Dorsolateral prefrontal cortex (tissue), 120 donors: ENCODE measurements at regions of chr11 and their contacts with region 1.

Region 1: GRCh38 chr11:47766305-47767227 is 575 bp downstream of the FNBP4 start:
- DNase-seq: peak; percentile 34 to 75 (median 56)
- H3K4me3 ChIP-seq: peak overlapping the region; percentile 65 to 99 (median 91)
- H3K27ac ChIP-seq: peak overlapping the region; percentile 80 to 100 (median 99)
- H3K27me3 ChIP-seq: no peaks in the 10 kb centered on the region
- CTCF ChIP-seq: peak in 3 of 56 donors; percentile 2 to 4 (median 3)

Region 2: DNA sequence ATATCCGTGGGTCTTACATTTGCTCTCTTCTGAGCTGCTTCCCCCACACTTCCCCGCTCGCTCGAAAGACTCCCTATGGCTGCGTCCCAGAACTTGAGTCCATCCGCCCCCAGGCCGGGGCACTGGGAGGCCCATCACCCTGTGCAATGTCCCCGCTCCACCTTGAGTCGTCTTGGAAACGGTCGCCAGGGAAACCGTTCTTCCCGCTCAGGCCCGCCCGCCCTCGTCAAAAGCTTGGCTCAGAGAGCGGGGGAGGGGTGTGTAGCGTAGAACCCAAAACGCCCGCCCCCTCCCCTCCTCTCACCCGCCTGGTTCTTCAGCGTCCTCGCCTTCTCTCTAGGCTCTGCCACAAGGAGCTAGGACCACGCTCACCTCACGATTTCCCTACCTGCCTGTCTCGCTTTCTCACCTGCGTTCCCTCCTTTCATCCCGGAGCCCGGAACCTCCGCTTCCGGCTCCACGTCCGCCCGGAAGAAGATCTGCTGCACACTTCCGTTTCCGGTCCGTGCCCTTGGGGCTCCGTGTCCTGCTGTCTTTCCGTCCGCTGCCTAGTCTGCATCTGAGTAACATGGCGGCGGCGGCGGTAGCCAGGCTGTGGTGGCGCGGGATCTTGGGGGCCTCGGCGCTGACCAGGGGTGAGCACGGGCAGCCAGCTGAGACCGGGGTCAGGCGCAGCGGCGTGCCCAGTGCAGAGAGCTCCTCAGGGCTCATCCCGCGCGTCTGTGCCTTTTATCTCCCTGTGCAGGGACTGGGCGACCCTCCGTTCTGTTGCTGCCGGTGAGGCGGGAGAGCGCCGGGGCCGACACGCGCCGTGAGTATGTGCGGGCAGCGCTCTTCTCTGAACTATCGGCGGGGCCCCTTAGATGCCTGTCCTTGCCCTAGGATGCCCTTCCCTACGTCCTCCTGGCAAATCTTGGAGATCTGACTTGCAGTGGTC is 187.8 kb before region 1 on chr11 and contains the starts of genes KBTBD4 and NDUFS3:
- intact Hi-C with region 1: loop called in 1 of 2 experiments (anchors 10 kb)
- DNase-seq: peak; percentile 76 to 93 (median 91)
- H3K4me3 ChIP-seq: peak within 1 kb of the TSS; percentile 77 to 100 (median 94)
- H3K27ac ChIP-seq: peak within 1 kb of the TSS; percentile 65 to 98 (median 92)
- H3K27me3 ChIP-seq: no peaks in the 10 kb centered on the region
- CTCF ChIP-seq: peak in 28 of 56 donors; percentile 10 to 57 (median 28)
- total RNA-seq, gene KBTBD4: 12.8 to 27.9 (median 19.6) TPM
- total RNA-seq, gene NDUFS3: 59.7 to 172 (median 126) TPM

Region 3: DNA sequence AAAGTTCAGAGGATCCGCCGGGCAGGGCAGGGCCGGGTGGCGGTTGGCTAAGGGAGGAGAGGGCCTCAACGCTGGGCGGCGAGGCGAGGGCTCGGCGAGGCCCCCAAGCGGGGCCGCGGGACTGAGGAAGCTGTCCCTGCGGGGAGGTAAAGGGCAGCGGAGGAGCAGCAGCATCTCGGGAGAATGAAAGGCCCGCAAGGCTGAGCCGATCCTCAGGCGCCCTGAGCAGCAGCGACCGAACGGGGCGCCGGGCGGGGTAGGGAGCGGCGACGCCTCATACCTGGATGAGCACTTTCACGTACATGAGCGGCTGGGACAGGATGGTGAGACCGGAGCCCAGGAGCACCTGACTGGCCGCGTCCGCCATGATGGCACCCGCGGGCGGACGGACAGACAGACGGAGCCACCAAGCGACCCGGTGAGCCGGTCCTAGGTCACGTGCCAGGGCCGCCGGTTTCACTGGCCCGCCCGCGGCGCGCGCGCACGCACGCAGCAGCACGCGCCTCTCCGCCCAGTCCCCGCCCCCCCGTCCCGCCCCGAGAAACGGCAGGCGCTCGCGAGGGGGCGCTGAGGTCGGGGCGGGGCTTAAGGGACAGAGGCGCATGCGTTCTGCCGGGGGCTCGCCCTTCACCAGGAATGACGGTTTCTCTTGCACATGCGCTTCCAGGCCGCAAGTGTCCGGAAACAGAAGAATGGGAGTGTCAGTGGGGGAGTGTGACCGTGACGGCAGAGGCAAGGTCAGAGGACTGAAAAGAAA is 124.3 kb before region 1 on chr11 and contains the start of gene MTCH2:
- intact Hi-C with region 1: loop called (anchors 1 to 2 kb)
- DNase-seq: peak; percentile 84 to 95 (median 93)
- H3K4me3 ChIP-seq: peak within 1 kb of the TSS; percentile 35 to 100 (median 92)
- H3K27ac ChIP-seq: peak within 1 kb of the TSS; percentile 78 to 100 (median 97)
- H3K27me3 ChIP-seq: no peaks in the 10 kb centered on the region
- CTCF ChIP-seq: peak; percentile 17 to 87 (median 61)
- total RNA-seq, gene MTCH2: 29.3 to 92.1 (median 64.1) TPM

Region 4: GRCh38 chr11:47732271-47732670 is 34.3 kb before region 1 on chr11:
- intact Hi-C with region 1: no loop called
- DNase-seq: no peak
- H3K4me3 ChIP-seq: no peak overlapping the region
- H3K27ac ChIP-seq: peak overlapping the region in 5 of 59 donors; percentile 3 to 43 (median 16)
- H3K27me3 ChIP-seq: no peaks in the 10 kb centered on the region
- CTCF ChIP-seq: no peak

Region 5: DNA sequence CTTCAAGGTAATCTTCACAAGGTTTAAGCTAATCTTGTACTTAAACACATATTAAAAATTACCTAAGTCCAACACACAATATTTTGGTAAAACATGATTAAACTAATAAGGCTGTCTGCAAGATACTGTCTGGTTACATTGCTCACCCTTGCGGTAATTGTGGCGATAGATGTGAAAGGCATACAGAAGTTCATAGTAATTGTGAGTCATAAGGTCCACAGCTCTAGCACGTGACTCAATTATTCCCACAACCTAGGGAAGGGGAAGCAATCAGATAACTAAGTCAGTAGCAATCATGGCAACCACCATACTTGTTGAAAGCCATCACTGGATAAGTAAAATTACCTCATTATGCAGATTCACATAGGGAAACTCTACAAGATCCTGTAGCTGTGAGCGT is 31.1 kb after region 1 on chr11:
- intact Hi-C with region 1: no loop called
- DNase-seq: no peak
- H3K4me3 ChIP-seq: no peak overlapping the region
- H3K27ac ChIP-seq: no peak overlapping the region
- H3K27me3 ChIP-seq: no peaks in the 10 kb centered on the region
- CTCF ChIP-seq: no peak